ENCODE measurements at regions of chr1 and their contacts with region 1.

Region 1: DNA sequence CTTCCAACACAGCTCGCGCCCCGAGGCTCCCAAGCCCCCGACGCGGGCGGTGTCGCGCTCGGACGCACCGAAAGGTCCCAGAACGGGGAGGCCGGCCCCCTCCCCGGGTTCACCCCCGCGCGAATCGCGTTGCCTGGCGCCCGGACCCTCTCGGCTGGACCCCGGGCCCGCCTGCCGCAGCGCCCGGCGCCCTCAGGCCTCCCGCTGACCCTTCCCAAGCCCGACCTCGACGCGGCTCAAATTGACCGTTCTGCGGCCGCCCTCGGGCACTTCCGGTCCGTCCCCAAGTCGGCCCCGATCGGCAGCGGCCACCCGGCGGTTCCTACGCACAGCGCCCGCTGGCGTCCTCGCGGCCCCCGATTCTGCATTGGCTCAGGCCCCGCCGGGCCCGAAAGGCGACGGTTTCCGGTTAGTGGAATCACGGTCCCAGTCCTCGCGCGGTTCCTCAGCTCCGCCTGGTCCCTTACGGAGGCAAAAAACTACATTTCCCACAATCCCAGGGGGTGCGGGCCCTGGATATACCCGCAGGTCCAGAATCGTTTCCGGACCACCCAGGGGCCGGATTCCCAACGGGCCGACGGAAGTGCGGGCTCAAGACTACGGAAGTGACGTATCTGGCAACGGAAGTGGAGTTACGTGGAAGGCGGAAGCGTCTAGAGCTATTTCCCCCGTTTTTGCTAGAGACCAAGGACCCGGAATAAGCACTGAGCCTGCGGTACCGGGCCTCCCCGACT is at the start of gene AURKAIP1:
- DNase-seq: peak; percentile 97
- H3K4me3 ChIP-seq: peak within 1 kb of the TSS; percentile 85
- CTCF ChIP-seq: peak; percentile 67

Region 2: DNA sequence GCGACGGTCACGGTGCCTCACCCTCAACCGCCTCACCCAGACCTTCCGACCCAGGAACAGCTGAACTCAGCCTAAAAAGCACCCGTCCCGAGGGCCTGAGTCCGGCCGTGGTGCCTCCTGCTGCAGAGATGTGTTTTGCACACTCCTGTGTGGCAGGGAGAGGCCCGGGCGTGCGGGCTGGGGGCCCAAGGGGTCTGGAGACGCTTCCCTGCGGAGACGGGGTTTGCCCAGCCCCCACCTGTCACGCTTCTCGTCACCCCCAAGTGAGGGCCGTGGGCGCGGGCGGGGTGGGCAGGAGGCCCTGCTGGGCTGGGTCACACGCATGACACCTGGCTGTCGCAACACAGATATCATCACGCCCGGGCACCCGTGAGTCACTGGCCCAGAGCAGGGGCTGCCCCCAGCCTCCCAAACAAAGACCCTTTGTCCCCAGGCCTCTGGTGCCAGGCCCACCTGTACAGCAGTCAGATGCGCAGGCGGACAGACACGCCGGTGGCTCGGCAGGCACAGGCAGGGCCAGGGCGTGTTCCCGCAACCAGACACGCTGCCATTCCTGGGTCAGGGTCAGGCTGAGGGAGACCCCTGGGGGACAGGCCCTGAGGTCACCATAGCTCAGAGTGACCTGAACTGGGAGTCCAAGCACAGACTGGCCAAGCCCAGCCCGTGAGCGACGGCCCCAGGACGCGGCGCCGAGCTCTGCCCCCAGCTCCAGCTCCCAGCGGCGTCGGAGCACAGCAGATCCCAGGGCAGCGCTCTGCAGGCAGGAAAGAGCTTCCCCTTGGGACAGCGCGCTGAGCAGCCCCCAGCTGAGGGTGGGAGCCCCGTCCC is 137.0 kb before region 1 on chr1:
- CTCF ChIA-PET with region 1: no interaction called
- POLR2A ChIA-PET with region 1: no interaction called
- DNase-seq: no peak
- H3K4me3 ChIP-seq: no peak overlapping the region
- CTCF ChIP-seq: no peak

Region 3: DNA sequence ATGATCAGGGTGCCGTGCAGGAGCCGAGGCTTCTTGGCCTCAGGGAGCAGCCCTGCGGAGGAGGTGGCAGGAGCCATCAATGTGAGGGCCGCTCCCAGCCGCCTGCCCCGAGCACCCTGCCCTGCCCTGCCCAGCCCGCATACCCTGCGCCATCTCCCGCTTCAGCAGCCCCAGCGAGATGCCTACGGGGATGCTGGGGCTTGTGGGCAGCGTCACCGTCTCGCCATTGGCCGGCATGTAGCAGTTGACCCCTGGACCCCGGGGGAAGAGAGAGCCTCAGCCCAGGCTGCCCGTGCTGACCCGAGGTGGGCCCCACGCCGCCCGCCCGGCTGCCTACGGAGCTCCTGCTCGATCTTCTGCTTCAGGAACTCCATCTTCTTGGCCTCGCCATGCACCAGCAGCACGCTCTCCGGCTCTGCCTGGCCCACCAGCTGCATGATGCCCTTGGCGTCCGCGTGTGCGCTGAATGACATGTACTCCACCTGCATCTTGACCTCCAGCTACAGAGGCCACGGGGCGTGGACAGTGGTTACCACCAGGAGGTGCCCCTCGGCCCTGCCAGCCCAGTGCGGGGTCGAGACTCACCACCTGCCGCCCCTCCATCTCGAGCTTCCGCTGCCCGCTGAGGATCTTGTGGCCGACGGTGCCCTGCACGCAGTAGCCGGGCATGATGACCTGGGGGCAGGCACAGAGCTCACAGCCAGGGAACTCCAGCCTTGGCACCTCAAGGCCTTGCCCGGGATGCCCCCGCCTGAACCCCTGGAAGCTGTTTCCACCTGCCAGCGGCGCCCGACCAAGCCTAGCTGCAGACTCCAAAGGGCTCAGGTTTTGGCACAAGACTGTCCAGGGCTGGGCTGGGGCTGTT is 62.4 kb before region 1 on chr1:
- CTCF ChIA-PET with region 1: interaction called, 10 read pairs
- POLR2A ChIA-PET with region 1: interaction called, 3 read pairs
- DNase-seq: no peak
- H3K4me3 ChIP-seq: no peak overlapping the region
- CTCF ChIP-seq: no peak

Region 4: DNA sequence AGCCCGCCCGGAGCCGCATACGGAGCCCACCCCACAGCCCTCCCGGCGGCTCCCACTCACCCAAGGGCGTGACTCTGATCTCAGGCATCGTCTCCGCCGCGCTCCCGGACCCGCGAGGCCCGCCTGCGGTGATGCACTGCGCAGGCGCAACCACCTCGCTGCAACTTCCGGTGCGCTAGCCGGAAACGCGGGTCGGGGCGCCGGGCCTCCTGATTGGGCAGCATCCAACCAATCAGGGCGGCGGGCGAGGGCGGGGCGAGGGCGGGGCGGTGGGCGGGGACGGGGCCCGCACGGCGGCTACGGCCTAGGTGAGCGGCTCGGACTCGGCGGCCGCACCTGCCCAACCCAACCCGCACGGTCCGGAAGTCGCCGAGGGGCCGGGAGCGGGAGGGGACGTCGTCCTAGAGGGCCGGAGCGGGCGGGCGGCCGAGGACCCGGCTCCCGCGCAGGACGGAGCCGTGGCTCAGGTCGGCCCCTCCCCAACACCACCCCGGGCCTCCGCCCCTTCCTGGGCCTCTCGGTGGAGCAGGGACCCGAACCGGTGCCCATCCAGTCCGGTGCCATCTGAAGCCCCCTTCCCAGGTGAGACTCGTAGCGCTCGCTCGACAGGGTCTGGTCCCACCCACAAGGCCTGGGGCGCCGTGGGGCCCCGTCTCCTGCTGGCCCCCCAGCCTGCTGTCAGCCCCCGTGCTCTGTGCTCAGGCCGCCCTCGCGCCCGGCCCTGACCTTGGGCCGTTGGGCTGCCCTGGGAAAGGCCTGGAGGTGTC is 50.4 kb before region 1 on chr1 and contains the starts of genes CPTP and INTS11:
- CTCF ChIA-PET with region 1: interaction called, 12 read pairs
- POLR2A ChIA-PET with region 1: no interaction called
- DNase-seq: no peak
- H3K4me3 ChIP-seq: peak within 1 kb of the TSS; percentile 86
- CTCF ChIP-seq: no peak

Region 5: GRCh38 chr1:1349256-1350012 is 25.7 kb before region 1 on chr1 and contains the start of gene DVL1:
- CTCF ChIA-PET with region 1: interaction called, 138 read pairs
- POLR2A ChIA-PET with region 1: interaction called, 12 read pairs
- DNase-seq: no peak
- H3K4me3 ChIP-seq: peak within 1 kb of the TSS; percentile 75
- CTCF ChIP-seq: peak; percentile 71

Region 6: DNA sequence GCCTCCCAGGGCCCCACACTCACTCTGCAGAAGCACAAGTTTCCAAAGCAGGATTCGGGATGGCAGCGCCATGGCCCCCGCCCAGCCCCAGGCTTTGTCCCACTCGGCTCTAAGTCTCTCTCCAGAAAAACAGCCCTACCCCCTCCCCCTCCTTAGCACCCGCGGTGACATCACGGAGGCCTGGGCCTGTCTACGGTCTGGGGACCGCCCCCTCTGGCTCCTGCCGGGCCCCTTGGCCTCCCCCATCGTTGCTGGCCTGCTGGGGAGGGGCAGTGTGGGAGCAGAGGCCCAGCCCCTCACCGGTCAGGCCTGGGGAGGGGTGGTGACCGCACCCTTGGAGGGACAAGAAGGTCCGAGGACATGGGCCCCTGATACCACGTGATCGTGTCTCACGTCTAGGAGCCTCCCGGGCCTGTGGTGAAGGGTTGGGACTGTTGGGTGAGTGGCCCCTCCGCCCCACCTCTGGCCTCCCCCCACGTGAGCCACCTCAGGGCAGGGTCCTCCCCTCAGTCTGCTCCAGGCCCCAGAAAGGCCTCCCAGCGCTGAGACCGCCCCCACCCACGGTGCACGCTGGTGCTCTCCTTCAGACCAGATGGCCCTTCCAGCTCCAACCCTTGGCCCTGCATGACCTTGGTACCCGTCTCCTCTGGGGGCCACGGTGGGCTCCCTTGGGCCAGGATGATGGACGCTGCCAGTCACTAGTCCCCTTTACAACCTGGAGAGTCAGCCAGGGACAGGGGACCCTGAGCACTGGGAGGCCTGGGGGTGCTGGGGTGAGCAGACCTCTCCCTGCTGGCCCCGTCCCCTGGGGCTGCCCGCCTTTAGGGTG is 16.4 kb before region 1 on chr1 and contains the start of gene MXRA8:
- CTCF ChIA-PET with region 1: interaction called, 27 read pairs
- POLR2A ChIA-PET with region 1: interaction called, 15 read pairs
- DNase-seq: peak; percentile 31
- H3K4me3 ChIP-seq: peak within 1 kb of the TSS; percentile 85
- CTCF ChIP-seq: no peak

Region 7: GRCh38 chr1:1721201-1721600 is 346.1 kb after region 1 on chr1:
- CTCF ChIA-PET with region 1: no interaction called
- POLR2A ChIA-PET with region 1: no interaction called
- DNase-seq: no peak
- H3K4me3 ChIP-seq: no peak overlapping the region
- CTCF ChIP-seq: no peak